T-cell (primary cell): ENCODE measurements at regions of chr10 and their contacts with region 1.

Region 1: DNA sequence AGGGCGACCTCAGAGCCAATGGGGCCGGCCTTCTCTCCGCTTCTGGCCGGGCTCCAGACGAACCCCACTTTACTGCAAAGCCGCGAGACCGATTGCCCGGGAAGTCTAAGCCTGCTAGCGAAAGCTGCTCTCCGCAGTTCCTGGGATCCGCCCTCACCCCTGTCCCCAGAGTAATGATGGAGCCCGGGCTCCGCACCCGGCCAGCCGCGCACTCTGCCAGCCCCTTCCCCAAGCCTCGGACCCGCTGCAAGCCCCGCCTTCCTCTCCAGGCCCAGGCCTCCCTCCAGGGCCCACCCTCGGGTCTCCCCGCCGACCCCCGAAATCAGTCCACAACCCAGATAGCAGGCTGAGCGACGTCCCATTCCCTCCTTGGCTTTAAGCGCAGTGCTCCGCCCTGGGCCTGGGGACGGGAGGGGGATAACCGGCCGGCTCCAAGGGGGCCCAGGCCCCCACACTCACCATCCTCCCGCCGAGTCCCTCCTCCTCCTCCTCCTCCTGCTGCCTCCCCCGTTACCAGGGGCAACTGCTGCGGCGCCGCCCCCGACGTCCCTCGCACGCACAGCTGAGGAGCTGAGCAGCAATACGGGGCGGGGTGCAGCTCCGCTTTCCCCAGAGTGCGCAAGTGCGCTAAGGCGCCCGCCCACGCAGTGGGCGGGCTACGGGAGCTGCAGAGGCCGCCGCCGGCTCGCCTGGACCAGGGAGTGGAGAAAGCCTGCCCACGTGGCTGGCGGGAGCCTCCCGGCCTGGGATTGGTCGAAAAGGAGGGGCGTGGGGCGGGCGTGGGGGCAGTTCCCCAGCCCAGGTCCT is at the start of gene ARL3:
- DNase-seq: peak; percentile 82 to 96 (median 90)
- ATAC-seq: peak; percentile 92 to 95 (median 92)
- H3K4me3 ChIP-seq: peak within 1 kb of the TSS; percentile 76 to 86
- H3K4me3 Mint-ChIP-seq: peak within 1 kb of the TSS; percentile 88 to 97 (median 95)
- H3K27ac ChIP-seq: peak within 1 kb of the TSS; percentile 83
- H3K27ac Mint-ChIP-seq: peak within 1 kb of the TSS; percentile 82 to 93
- H3K4me1 ChIP-seq: peaks cover 14 to 22% of the 10 kb centered on the region in 2 experiments
- H3K4me1 Mint-ChIP-seq: peaks cover 41 to 61% (median 52%) of the 10 kb centered on the region in 3 donors
- H3K27me3 ChIP-seq: no peaks in the 10 kb centered on the region
- H3K27me3 Mint-ChIP-seq: no peaks in the 10 kb centered on the region
- total RNA-seq, gene ARL3: 2.7 to 5.0 (median 3.5) TPM

Region 2: GRCh38 chr10:102511583-102512274 is 202.3 kb before region 1 on chr10:
- CTCF ChIA-PET with region 1: no interaction called
- POLR2A ChIA-PET with region 1: interaction called in 1 of 2 experiments, 10 read pairs
- DNase-seq: no peak
- ATAC-seq: peak in 3 of 4 experiments; percentile 34 to 51 (median 44)
- H3K4me3 ChIP-seq: no peak overlapping the region
- H3K4me3 Mint-ChIP-seq: no peak overlapping the region
- H3K27ac ChIP-seq: no peak overlapping the region
- H3K27ac Mint-ChIP-seq: peak overlapping the region; percentile 32 to 78
- H3K4me1 ChIP-seq: peaks cover 2 to 3% of the 10 kb centered on the region in 2 experiments
- H3K4me1 Mint-ChIP-seq: peaks cover 23 to 28% (median 28%) of the 10 kb centered on the region in 3 donors
- H3K27me3 ChIP-seq: no peaks in the 10 kb centered on the region
- H3K27me3 Mint-ChIP-seq: no peaks in the 10 kb centered on the region

Region 3: GRCh38 chr10:102645741-102646609 is 68.0 kb before region 1 on chr10:
- CTCF ChIA-PET with region 1: interaction called, 3 to 20 read pairs
- POLR2A ChIA-PET with region 1: interaction called in 1 of 2 experiments, 4 read pairs
- DNase-seq: peak; percentile 46 to 80 (median 61)
- ATAC-seq: peak; percentile 12 to 35 (median 29)
- H3K4me3 ChIP-seq: peak overlapping the region; percentile 95 to 96
- H3K4me3 Mint-ChIP-seq: peak overlapping the region; percentile 95 to 98 (median 97)
- H3K27ac ChIP-seq: peak overlapping the region; percentile 94
- H3K27ac Mint-ChIP-seq: peak overlapping the region; percentile 94 to 98
- H3K4me1 ChIP-seq: peaks cover 45 to 66% of the 10 kb centered on the region in 2 experiments
- H3K4me1 Mint-ChIP-seq: peaks cover 51 to 65% (median 57%) of the 10 kb centered on the region in 3 donors
- H3K27me3 ChIP-seq: no peaks in the 10 kb centered on the region
- H3K27me3 Mint-ChIP-seq: no peaks in the 10 kb centered on the region

Region 4: GRCh38 chr10:102743588-102744373 is 29.8 kb after region 1 on chr10 and contains the start of gene WBP1L:
- CTCF ChIA-PET with region 1: interaction called, 3 to 28 read pairs
- POLR2A ChIA-PET with region 1: interaction called in 1 of 2 experiments, 3 read pairs
- DNase-seq: peak; percentile 87 to 98 (median 95)
- ATAC-seq: peak; percentile 96 to 98 (median 97)
- H3K4me3 ChIP-seq: peak within 1 kb of the TSS; percentile 85 to 97
- H3K4me3 Mint-ChIP-seq: peak within 1 kb of the TSS; percentile 87 to 98 (median 95)
- H3K27ac ChIP-seq: peak within 1 kb of the TSS; percentile 50
- H3K27ac Mint-ChIP-seq: peak within 1 kb of the TSS; percentile 86 to 89
- H3K4me1 ChIP-seq: peaks cover 19 to 22% of the 10 kb centered on the region in 2 experiments
- H3K4me1 Mint-ChIP-seq: peaks cover 47 to 54% (median 53%) of the 10 kb centered on the region in 3 donors
- H3K27me3 ChIP-seq: no peaks in the 10 kb centered on the region
- H3K27me3 Mint-ChIP-seq: no peaks in the 10 kb centered on the region
- total RNA-seq, gene WBP1L: 20.0 to 38.5 (median 33.0) TPM